ENCODE measurements at regions of chr4 and their contacts with region 1.

Region 1: GRCh38 chr4:1856042-1856788 is at the start of gene LETM1:
- DNase-seq: peak; percentile 81 to 97 (median 91)
- ATAC-seq: peak; percentile 97
- H3K4me3 ChIP-seq: peak within 1 kb of the TSS; percentile 75
- H3K4me3 Mint-ChIP-seq: peak within 1 kb of the TSS; percentile 94
- H3K27ac ChIP-seq: peak within 1 kb of the TSS in 1 of 2 donors; percentile 5
- H3K27ac Mint-ChIP-seq: peak within 1 kb of the TSS; percentile 76
- H3K4me1 ChIP-seq: peaks cover 32% of the 10 kb centered on the region
- H3K4me1 Mint-ChIP-seq: peaks cover 40% of the 10 kb centered on the region
- H3K27me3 ChIP-seq: no peaks in the 10 kb centered on the region
- H3K27me3 Mint-ChIP-seq: no peaks in the 10 kb centered on the region
- CTCF ChIP-seq: no peak
- total RNA-seq, gene LETM1: 21.2 to 25.2 TPM

Region 2: GRCh38 chr4:1683736-1684505 is 172.3 kb before region 1 on chr4 and contains the start of gene FAM53A:
- CTCF ChIA-PET with region 1: no interaction called
- POLR2A ChIA-PET with region 1: no interaction called
- intact Hi-C with region 1: loop called in 1 of 2 experiments (anchors 10 kb)
- DNase-seq: peak in 11 of 14 experiments; percentile 7 to 96 (median 41)
- ATAC-seq: peak; percentile 91
- H3K4me3 ChIP-seq: peak within 1 kb of the TSS; percentile 58
- H3K4me3 Mint-ChIP-seq: peak within 1 kb of the TSS; percentile 93
- H3K27ac ChIP-seq: no peak within 1 kb of the TSS
- H3K27ac Mint-ChIP-seq: peak within 1 kb of the TSS; percentile 85
- H3K4me1 ChIP-seq: peaks cover 19% of the 10 kb centered on the region
- H3K4me1 Mint-ChIP-seq: peaks cover 13% of the 10 kb centered on the region
- H3K27me3 ChIP-seq: no peaks in the 10 kb centered on the region
- H3K27me3 Mint-ChIP-seq: no peaks in the 10 kb centered on the region
- CTCF ChIP-seq: no peak
- total RNA-seq, gene FAM53A: 0.93 to 2.4 TPM

Region 3: GRCh38 chr4:1721004-1721665 is 135.1 kb before region 1 on chr4 and contains the starts of genes TACC3 and TMEM129:
- CTCF ChIA-PET with region 1: no interaction called
- POLR2A ChIA-PET with region 1: interaction called, 4 read pairs
- intact Hi-C with region 1: loop called in 1 of 2 experiments (anchors 1 kb)
- DNase-seq: peak; percentile 90 to 99 (median 95)
- ATAC-seq: peak; percentile 80
- H3K4me3 ChIP-seq: peak within 1 kb of the TSS; percentile 53
- H3K4me3 Mint-ChIP-seq: peak within 1 kb of the TSS; percentile 92
- H3K27ac ChIP-seq: peak within 1 kb of the TSS; percentile 85 to 88
- H3K27ac Mint-ChIP-seq: peak within 1 kb of the TSS; percentile 99
- H3K4me1 ChIP-seq: peaks cover 77% of the 10 kb centered on the region
- H3K4me1 Mint-ChIP-seq: peaks cover 56% of the 10 kb centered on the region
- H3K27me3 ChIP-seq: no peaks in the 10 kb centered on the region
- H3K27me3 Mint-ChIP-seq: no peaks in the 10 kb centered on the region
- CTCF ChIP-seq: no peak
- total RNA-seq, gene TACC3: 123 TPM
- total RNA-seq, gene TMEM129: 17.2 to 17.6 TPM

Region 4: DNA sequence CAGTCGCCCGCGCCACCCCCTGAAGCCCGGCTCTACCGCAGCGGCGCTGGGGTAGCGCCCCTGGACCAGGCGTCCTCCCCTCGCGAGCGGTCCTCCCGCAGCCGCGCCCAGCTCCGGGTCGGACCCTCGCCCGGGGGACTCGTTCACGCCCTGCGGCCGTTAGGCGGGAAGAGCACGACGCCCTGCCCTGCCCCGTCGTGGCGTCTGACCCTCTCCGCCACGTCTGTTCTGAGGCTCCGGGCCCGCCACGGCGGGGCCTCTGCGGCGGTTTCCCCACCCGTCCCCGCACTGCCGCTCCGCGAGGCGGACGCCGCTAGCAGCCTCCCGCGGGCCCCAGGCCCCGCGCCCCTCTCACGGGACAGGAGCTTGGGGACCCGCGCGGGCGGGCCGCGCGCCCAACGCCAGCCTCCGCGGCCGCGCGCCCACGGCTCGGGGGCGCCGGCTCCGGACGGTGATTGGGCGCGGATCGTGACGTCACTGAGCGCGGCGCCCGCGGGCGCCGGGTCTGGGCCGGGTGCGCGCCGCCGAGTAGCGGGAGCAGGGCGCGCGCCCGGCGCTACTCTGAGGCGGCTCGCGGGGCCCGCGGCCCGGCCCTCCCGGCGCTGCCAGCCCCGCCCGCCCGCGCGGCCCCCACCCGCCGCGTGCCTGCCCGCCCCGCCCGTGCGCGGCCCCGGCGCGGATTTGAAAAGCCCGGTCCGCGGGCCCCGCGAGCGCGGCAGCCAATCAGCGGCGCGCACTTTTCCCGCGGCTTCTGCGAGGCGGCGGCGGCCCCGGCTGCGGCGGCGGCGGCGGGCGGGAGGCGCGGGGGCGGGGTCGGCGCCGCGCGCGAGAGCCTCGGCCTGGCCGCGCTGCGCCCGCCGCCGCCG is 14.6 kb after region 1 on chr4 and contains the start of gene NSD2:
- CTCF ChIA-PET with region 1: interaction called, 5 read pairs
- POLR2A ChIA-PET with region 1: interaction called, 62 read pairs
- intact Hi-C with region 1: loop called (anchors 1 to 2 kb)
- DNase-seq: peak; percentile 80 to 97 (median 88)
- ATAC-seq: peak; percentile 63
- H3K4me3 ChIP-seq: peak within 1 kb of the TSS; percentile 63
- H3K4me3 Mint-ChIP-seq: peak within 1 kb of the TSS; percentile 92
- H3K27ac ChIP-seq: peak within 1 kb of the TSS; percentile 79 to 94
- H3K27ac Mint-ChIP-seq: peak within 1 kb of the TSS; percentile 89
- H3K4me1 ChIP-seq: peaks cover 29% of the 10 kb centered on the region
- H3K4me1 Mint-ChIP-seq: peaks cover 34% of the 10 kb centered on the region
- H3K27me3 ChIP-seq: no peaks in the 10 kb centered on the region
- H3K27me3 Mint-ChIP-seq: peaks cover 5% of the 10 kb centered on the region
- CTCF ChIP-seq: no peak
- total RNA-seq, gene NSD2: 42.4 to 45.8 TPM

Region 5: DNA sequence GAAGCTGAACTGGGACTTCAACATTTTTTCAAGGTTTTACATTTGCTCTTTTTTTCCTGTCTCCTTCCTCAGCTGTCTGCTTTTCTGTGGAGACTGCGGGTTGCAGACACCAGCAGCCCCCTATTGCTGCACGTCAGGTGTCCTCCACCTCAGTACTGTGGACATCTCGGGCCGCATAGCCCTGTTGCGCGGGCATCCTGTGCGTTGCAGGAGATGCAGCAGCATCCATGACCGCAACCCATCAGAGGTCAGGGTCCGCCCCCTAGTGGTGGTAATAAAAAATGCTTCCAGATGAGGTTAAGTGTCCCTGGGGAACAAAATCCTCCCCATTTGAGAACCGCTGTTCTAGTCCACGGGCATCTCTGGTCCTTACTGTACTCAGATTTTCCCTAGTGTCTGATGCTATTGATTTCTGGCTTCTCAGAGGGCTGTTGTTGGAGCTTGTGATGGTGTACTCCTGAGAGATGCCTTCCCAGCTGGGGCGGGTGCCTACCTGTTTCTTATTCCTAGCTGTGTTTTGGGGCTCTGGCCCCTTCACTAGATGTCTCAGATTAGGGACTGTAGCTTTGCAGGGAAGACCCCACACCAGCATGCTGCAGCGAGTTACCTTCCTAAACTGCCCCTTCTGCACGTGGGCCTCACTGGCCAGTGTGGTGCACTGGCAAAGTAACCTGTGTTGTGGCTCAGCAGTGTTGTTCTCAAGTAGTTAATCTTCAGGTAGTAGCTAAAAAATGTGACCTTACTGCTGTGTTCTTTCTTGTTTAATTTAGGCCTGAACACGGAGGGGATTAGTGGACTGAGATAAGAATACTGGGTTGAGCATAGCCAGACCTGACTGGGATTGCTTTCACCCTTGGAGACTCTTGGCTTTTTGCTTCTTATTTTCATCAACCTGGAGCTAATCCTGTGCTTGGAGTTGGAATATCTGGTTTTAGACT is 43.2 kb after region 1 on chr4:
- CTCF ChIA-PET with region 1: interaction called, 3 read pairs
- POLR2A ChIA-PET with region 1: interaction called, 3 read pairs
- intact Hi-C with region 1: loop called in 1 of 2 experiments (anchors 2 kb)
- DNase-seq: peak; percentile 56 to 90 (median 63)
- ATAC-seq: peak; percentile 98
- H3K4me3 ChIP-seq: no peak overlapping the region
- H3K4me3 Mint-ChIP-seq: no peak overlapping the region
- H3K27ac ChIP-seq: no peak overlapping the region
- H3K27ac Mint-ChIP-seq: no peak overlapping the region
- H3K4me1 ChIP-seq: peaks cover 9% of the 10 kb centered on the region
- H3K4me1 Mint-ChIP-seq: peaks cover 10% of the 10 kb centered on the region
- H3K27me3 ChIP-seq: no peaks in the 10 kb centered on the region
- H3K27me3 Mint-ChIP-seq: no peaks in the 10 kb centered on the region
- CTCF ChIP-seq: peak; percentile 90

Region 6: DNA sequence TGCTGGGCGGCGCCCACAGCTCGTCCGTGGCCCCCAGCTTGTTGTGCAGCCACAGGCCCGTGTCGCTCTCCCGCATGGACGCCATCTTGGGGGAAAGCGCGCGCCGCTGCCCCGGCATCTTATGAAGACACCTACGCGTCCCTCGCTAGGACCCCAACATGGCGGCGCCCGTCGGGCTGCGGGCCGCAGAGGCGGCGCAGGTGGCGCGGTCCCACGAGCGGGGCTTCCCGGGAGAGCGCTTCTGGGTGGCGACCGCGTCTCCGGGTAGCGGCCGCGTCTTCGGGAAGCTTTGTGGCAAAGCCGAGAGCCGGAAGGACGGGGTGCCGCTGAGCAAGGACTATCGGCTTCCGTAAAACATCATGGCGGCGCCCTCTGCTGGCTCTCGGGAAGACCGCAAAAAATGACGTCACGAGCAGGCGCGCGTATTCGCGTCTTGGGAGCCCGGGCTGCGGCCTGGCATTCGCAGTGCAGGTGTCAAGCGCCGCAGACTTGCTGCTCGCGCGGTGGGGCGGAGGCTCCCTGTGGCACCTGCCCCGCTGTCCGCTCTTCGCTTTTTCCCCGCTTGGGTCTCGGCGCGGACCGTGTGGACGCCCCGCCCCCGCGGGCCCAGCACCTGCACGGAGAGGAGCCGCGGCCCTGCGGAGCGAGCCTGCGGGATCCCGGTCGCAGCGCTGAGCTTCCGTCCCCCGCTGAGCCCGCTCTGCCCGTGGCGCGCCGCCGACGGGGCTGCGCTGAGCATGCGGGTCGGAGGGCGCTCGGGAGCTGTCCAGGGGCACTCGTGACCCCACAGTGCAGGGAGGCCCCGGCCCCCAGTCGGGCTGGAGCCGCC is 152.9 kb after region 1 on chr4 and contains the start of gene NELFA:
- CTCF ChIA-PET with region 1: no interaction called
- POLR2A ChIA-PET with region 1: no interaction called
- intact Hi-C with region 1: loop called in 1 of 2 experiments (anchors 5 kb)
- DNase-seq: peak; percentile 93 to 98 (median 95)
- ATAC-seq: peak; percentile 79
- H3K4me3 ChIP-seq: peak within 1 kb of the TSS; percentile 87
- H3K4me3 Mint-ChIP-seq: peak within 1 kb of the TSS; percentile 98
- H3K27ac ChIP-seq: peak within 1 kb of the TSS; percentile 97 to 99
- H3K27ac Mint-ChIP-seq: peak within 1 kb of the TSS; percentile 95
- H3K4me1 ChIP-seq: peaks cover 31% of the 10 kb centered on the region
- H3K4me1 Mint-ChIP-seq: peaks cover 39% of the 10 kb centered on the region
- H3K27me3 ChIP-seq: no peaks in the 10 kb centered on the region
- H3K27me3 Mint-ChIP-seq: no peaks in the 10 kb centered on the region
- CTCF ChIP-seq: no peak
- total RNA-seq, gene NELFA: 39.9 to 40.1 TPM

Measured in CD4-positive, alpha-beta T cell (primary cell).